ENCODE measurements at regions of chr12 and their contacts with region 1.

Region 1: DNA sequence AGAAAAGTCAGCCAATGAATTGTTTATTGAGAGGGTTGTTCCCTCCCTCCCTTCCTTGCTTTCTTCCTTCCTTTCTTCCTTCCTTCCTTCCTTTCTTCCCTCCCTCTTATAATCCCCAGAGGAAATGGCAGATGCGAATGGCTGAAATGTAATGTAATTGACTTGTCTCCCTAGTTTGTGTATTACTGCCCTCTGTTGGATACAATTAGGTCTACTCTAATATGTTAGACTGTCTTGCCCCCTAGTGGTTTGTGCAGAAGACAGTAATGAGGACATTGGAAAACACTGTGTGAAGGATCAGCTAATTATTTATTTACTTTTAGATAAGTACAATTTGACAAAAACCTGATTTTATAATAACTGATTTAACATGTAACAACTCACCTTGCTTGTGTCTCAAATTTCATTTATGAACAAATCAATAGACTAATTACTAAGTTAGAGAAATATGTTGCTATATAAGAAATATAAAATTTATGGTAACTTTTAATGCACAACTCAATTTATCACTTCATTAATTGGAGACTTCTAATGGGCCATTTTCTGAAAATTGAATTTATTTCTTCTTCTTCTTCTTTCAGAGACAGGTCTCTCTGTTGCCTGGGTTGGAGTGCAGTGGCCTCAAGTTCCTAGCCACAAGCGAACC is 229.8 kb upstream of the LRIG3 start:
- DNase-seq: peak; percentile 21
- ATAC-seq: peak; percentile 100
- H3K4me3 ChIP-seq: no peak overlapping the region
- H3K27ac ChIP-seq: no peak overlapping the region
- H3K4me1 ChIP-seq: no peaks in the 10 kb centered on the region
- H3K27me3 ChIP-seq: no peaks in the 10 kb centered on the region
- CTCF ChIP-seq: peak; percentile 86 to 99 (median 87); a peak in 5 of 6 replicates
- EP300 ChIP-seq: no peak
- POLR2A ChIP-seq: no peak
- RAD21 ChIP-seq: peak; percentile 89

Region 2: DNA sequence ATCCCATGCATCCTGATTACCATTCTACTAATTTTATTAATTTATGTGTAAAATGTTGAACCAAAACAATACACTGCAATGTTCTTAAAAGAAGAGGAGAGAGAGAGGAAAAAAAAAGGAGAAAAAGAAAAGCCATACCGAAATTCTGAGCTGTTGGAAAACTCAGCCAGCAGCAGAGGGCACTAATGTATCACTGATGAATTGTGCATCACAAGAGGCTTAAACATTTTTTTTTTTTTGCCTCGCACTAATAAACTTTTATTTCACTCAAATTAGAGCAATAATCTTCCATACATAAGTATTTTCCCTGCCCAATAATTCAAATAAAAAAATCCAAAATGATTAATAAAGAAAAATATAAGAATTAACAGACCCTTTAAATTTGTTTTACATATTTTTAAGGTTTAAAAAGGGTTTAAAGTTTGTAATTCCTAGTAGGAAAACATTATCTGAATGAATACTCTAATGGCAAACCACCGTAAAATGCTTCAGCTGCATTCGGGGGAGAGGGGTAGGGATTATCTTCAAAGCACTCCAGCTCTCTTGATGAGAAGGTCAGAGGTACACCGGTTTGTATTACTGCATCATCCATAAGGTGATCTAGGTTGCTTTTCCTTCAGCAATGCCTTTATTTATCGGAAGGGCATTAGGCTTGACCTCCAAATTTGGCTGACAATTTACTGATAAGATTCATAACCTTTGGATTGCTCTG is 1166.8 kb before region 1 on chr12:
- CTCF ChIA-PET with region 1: interaction called, 7 read pairs
- POLR2A ChIA-PET with region 1: no interaction called
- RAD21 ChIA-PET with region 1: no interaction called
- SMC1A ChIA-PET with region 1: no interaction called
- in situ Hi-C with region 1: loop called (anchors 10 kb)
- intact Hi-C with region 1: loop called (anchors 10 kb)
- DNase-seq: no peak
- ATAC-seq: no peak
- H3K4me3 ChIP-seq: no peak overlapping the region
- H3K27ac ChIP-seq: no peak overlapping the region
- H3K4me1 ChIP-seq: no peaks in the 10 kb centered on the region
- H3K27me3 ChIP-seq: no peaks in the 10 kb centered on the region; a peak in 1 of 4 replicates
- CTCF ChIP-seq: peak; percentile 35 to 58 (median 42); a peak in 5 of 6 replicates
- EP300 ChIP-seq: no peak
- POLR2A ChIP-seq: no peak
- RAD21 ChIP-seq: peak; percentile 77

Region 3: DNA sequence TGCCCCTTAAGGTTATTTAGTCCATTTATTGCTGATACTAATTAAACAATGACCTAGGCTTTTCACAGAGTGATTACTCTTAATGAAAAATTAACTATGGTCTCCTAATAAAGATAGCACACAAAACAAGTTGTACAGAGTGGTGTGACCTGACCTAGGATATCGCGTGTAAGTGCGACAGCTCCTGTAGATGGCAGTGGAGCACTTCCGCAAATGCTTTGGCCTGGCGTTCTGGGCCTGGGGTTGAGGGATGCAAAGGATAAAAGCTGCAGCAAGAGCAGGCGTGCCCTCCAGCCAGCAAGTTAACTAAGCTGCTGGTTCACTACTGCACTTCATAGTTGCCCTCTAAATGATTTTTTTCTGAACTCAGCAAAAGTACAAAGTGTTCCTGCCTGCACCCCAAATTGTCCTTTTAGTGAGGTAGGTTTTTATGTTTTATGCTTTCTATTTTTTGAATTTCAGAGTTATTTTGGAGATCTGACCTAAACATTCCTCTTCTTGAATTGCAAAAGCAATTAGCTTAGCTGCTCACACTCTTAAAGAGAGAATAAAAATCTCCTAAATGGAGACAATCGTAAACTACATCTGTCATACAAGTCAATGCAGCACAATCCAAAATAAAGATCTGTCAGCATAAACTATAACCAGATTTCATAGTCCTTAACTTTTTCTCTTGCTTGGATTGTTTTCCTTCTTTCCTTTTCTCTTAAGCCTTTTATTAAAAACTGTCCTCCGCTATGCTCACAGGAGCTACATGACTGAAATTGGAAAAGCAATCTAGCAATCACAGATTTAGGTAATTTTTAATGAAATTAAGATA is 609.4 kb before region 1 on chr12:
- CTCF ChIA-PET with region 1: interaction called, 39 read pairs
- POLR2A ChIA-PET with region 1: no interaction called
- RAD21 ChIA-PET with region 1: interaction called, 10 read pairs
- SMC1A ChIA-PET with region 1: interaction called, 13 read pairs
- in situ Hi-C with region 1: loop called (anchors 5 kb)
- intact Hi-C with region 1: loop called (anchors 2 kb)
- DNase-seq: peak; percentile 3
- ATAC-seq: peak; percentile 92
- H3K4me3 ChIP-seq: no peak overlapping the region
- H3K27ac ChIP-seq: no peak overlapping the region
- H3K4me1 ChIP-seq: no peaks in the 10 kb centered on the region
- H3K27me3 ChIP-seq: no peaks in the 10 kb centered on the region
- CTCF ChIP-seq: peak; percentile 52 to 74 (median 63)
- EP300 ChIP-seq: no peak
- POLR2A ChIP-seq: no peak
- RAD21 ChIP-seq: peak; percentile 69

Region 4: DNA sequence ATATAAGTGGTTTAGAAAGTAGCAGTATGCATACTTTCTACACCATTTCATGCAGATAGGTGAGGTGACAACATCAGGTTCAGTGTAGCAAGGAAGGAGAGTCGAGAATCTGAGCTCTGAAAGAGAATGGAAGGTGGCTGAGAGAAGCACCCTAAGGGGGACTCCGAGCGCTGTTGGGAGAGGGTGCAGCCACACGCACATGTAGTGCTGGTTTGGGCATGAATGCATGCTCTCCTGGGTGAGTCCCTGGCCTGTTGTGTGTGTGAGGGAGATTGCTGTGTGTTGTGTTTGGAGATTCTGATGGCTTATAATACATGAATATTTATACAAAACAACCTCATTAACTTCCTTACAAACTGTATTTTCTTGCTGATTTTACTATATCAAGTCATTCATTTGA is 49.5 kb before region 1 on chr12:
- CTCF ChIA-PET with region 1: no interaction called
- POLR2A ChIA-PET with region 1: no interaction called
- RAD21 ChIA-PET with region 1: no interaction called
- SMC1A ChIA-PET with region 1: no interaction called
- in situ Hi-C with region 1: no loop called
- intact Hi-C with region 1: no loop called
- DNase-seq: no peak
- ATAC-seq: no peak
- H3K4me3 ChIP-seq: no peak overlapping the region
- H3K27ac ChIP-seq: no peak overlapping the region
- H3K4me1 ChIP-seq: no peaks in the 10 kb centered on the region
- H3K27me3 ChIP-seq: no peaks in the 10 kb centered on the region
- CTCF ChIP-seq: no peak
- EP300 ChIP-seq: no peak
- POLR2A ChIP-seq: no peak
- RAD21 ChIP-seq: no peak

Region 5: GRCh38 chr12:59113831-59114615 is 36.1 kb before region 1 on chr12:
- CTCF ChIA-PET with region 1: interaction called, 49 read pairs
- POLR2A ChIA-PET with region 1: no interaction called
- RAD21 ChIA-PET with region 1: interaction called, 6 read pairs
- SMC1A ChIA-PET with region 1: interaction called, 6 read pairs
- in situ Hi-C with region 1: no loop called
- intact Hi-C with region 1: loop called (anchors 1 kb)
- DNase-seq: peak; percentile 9
- ATAC-seq: peak; percentile 92
- H3K4me3 ChIP-seq: no peak overlapping the region
- H3K27ac ChIP-seq: no peak overlapping the region
- H3K4me1 ChIP-seq: no peaks in the 10 kb centered on the region
- H3K27me3 ChIP-seq: no peaks in the 10 kb centered on the region
- CTCF ChIP-seq: peak; percentile 87 to 91 (median 88); a peak in 5 of 6 replicates
- EP300 ChIP-seq: no peak
- POLR2A ChIP-seq: no peak
- RAD21 ChIP-seq: peak; percentile 91

Region 6: DNA sequence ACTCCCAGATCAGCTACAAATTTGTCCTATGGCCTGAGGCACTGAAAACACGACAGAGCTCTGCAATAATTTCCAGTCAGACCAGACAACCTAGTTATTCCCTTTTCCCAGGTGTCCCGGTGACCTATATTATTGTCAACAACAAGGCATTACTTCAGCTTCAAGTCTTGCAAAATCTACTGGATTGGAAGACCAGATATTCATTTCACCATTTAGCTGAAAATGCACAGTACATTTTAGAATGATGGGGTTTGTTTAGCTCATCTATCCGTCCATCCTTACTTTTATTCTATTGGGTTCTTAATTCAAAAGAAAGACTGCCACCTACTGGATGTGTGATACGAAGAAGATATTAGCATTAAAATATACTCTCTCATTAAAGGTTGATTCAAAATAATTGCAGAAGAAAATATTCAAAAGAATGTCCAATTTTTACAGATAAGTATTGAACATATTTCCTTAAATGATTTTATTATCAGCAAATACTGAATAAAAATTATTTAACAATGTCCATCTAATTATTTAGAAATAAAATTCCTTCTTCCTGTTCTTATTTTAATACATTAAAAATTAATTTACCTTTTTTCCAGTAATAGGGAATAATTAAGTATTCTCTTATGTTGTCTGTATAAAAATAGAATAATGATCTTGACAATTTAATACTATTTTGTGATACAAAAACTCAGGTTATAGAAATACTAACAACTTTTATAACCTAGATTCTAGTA is 15.0 kb after region 1 on chr12:
- CTCF ChIA-PET with region 1: interaction called, 35 read pairs
- POLR2A ChIA-PET with region 1: no interaction called
- RAD21 ChIA-PET with region 1: no interaction called
- SMC1A ChIA-PET with region 1: interaction called, 6 read pairs
- in situ Hi-C with region 1: no loop called
- intact Hi-C with region 1: no loop called
- DNase-seq: no peak
- ATAC-seq: no peak; the same call in 2 of the 3 replicates
- H3K4me3 ChIP-seq: no peak overlapping the region
- H3K27ac ChIP-seq: no peak overlapping the region
- H3K4me1 ChIP-seq: no peaks in the 10 kb centered on the region
- H3K27me3 ChIP-seq: no peaks in the 10 kb centered on the region
- CTCF ChIP-seq: peak in 1 of 3 experiments; percentile 32; a peak in 2 of 6 replicates
- EP300 ChIP-seq: no peak
- POLR2A ChIP-seq: no peak
- RAD21 ChIP-seq: no peak

Region 7: DNA sequence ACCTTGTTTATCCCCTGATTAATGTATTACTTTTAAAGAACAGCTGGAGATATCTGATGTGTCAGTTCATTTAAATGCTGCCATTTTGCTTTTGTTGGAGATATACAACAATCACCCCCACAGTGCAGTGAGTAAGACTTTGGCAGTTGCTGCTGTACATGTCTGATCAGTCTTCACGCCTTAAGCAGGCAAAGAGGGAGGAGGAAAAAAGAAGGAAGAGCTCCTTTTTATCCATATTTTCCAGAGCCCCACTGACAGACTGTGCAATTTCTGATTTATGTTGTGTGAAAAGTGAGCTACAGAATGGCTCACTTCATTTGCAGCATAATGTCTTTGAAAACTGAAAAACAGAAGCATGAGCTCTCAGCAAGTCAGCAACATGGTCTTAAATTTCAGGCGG is 89.9 kb after region 1 on chr12:
- CTCF ChIA-PET with region 1: no interaction called
- POLR2A ChIA-PET with region 1: no interaction called
- RAD21 ChIA-PET with region 1: no interaction called
- SMC1A ChIA-PET with region 1: no interaction called
- in situ Hi-C with region 1: no loop called
- intact Hi-C with region 1: no loop called
- DNase-seq: no peak
- ATAC-seq: no peak
- H3K4me3 ChIP-seq: no peak overlapping the region
- H3K27ac ChIP-seq: no peak overlapping the region
- H3K4me1 ChIP-seq: no peaks in the 10 kb centered on the region
- H3K27me3 ChIP-seq: no peaks in the 10 kb centered on the region
- CTCF ChIP-seq: no peak
- EP300 ChIP-seq: no peak
- POLR2A ChIP-seq: no peak
- RAD21 ChIP-seq: no peak